ENCODE measurements at regions of chr2 and their contacts with region 1.

Region 1: DNA sequence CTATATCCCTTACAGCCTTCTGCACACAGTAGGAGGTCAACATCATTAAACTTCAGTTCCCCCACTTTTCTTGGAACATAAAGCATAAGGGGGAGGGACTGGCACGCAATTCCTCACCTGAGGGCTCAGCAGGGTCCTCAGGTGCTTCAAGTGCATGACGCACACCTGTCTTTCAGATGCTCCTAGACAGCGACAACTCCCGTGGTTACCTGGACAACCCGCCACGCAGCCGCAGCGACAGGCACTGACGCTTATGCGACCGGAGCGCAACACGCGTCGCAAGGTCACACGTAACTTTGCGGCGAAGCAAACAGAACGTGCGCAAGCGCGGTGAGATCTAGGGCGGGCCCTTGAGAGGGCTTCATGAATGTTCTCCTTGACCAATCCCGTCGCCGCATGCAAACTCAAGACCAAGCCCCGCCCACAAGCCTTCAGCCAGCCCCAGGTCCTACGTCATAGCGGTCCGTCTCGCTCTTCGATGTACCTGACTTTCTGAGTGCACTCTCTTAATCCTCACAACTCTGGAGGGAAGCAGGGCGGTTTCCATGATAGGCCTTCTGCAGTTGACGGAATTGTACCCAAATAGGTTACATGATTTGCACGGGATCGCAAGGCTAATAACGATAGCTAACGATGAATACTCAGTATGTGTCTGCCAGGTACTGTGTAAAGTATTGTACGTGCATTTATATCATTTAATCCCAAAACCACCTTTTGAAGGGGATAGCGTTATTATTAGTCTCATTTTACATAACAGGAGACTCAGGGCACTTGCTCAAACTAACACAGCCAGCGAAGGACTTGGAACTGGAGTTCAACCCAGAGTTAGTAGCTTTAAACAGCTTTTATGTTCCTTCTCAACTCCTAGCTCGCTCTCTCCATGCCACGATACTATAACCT is at the start of gene IFT172:
- DNase-seq: peak; percentile 100
- H3K4me3 Mint-ChIP-seq: peak within 1 kb of the TSS; percentile 88
- H3K27ac Mint-ChIP-seq: peak within 1 kb of the TSS; percentile 76
- H3K4me1 Mint-ChIP-seq: peaks cover 31% of the 10 kb centered on the region
- H3K27me3 Mint-ChIP-seq: peaks cover 14% of the 10 kb centered on the region
- total RNA-seq, gene IFT172: 7.7 to 8.2 TPM

Region 2: DNA sequence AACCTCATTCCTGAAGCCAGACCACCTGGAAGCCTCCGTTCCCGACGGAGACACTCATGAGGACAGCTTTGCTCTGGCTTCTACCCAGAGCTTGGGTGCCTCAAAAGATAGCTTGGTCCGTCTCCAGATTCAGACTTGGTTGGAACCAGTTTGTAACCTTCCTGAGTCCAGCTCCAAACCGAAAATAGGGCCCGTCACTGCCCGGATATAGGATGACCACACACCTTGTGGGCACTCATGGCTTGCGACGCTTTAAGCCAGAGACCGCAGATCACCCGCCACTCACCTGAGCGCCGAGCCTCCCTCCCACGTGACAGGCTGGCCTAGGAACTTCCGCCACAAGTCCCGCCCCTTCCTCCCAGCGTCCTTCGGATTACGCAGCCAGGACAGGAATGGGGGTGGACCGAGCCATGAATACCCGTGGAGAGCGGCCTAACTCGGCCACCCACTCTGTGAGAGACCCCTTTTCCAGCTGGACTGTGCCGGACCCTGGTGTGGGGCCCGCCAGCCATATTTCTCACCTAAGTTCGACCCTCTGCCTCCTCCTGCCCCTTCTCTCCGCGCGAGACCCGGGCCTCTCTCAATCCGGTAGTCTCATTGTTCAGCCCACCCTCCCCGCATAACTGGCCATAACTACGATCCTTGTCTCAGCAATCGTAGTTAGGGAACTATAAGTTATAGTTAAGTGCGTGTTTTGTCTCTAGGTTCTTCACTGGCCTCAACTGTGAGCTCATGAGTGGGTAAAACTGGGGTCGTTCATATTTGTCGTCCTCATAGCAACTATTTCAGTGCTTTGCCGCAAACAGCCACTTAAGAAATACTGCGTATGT is 166.8 kb before region 1 on chr2 and contains the start of gene MPV17:
- CTCF ChIA-PET with region 1: no interaction called
- POLR2A ChIA-PET with region 1: no interaction called
- intact Hi-C with region 1: loop called (anchors 1 kb)
- DNase-seq: peak; percentile 94
- H3K4me3 Mint-ChIP-seq: peak within 1 kb of the TSS; percentile 93
- H3K27ac Mint-ChIP-seq: peak within 1 kb of the TSS; percentile 88
- H3K4me1 Mint-ChIP-seq: peaks cover 18% of the 10 kb centered on the region
- H3K27me3 Mint-ChIP-seq: no peaks in the 10 kb centered on the region
- total RNA-seq, gene MPV17: 85.5 to 86.0 TPM

Region 3: DNA sequence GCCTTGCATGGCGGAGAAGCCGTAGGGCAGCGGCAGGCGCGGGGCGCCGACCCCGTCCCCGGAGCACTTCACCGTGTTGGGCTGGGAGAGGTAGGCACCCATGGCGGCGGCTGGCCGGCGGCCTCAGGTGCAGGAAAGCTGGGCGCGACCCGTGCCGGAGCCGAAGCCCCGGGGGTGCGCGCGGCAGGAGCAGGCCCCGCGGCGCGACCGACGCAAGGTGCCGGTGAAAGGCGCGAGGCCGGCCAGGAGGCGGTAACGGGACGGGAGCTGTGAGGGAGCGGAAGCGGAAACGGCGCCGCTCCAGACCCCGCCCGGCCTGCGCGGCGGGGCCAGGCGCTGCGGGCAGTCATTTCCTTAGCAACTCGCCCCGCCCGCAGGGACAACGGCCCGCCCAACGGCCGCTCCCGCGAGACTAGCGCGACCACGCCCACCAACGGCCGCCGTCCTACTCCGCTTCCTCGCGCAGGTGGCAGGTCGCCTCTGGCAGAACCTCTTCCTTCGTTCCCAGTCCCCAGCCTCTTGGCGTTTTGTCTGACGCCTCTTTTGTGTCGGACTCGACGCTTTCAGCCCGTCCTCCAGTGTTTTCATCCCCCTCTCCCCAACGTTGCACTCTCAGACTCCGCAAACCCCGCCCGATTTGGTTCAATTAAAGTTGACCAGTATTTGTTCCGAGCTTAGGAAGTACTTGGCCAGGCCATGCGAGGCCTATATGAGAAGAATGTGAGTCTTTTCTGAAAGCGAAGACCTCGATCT is 80.3 kb before region 1 on chr2 and contains the start of gene PPM1G:
- CTCF ChIA-PET with region 1: no interaction called
- POLR2A ChIA-PET with region 1: no interaction called
- intact Hi-C with region 1: loop called (anchors 1 kb)
- DNase-seq: peak; percentile 98
- H3K4me3 Mint-ChIP-seq: peak within 1 kb of the TSS; percentile 88
- H3K27ac Mint-ChIP-seq: peak within 1 kb of the TSS; percentile 87
- H3K4me1 Mint-ChIP-seq: peaks cover 32% of the 10 kb centered on the region
- H3K27me3 Mint-ChIP-seq: no peaks in the 10 kb centered on the region
- total RNA-seq, gene PPM1G: 127 to 132 TPM

Region 4: DNA sequence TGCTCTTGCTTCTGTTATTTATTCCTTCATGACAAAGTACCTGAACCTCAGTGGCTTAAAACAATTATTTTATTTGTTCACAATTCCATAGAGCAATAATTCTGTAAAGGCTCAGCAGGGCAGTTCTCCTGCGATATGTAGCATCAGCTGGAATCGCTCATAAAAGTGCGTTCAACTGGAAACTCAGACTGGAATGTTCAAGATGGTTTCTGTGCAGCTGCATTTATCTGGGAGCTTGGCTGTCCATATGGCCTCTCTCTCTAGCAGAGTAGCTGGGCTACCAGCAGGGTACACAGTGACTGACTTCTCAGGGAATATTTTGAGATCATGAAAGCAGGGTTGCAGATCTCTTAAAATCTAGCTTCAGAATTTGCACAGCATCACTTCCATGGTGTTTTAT is 125.6 kb after region 1 on chr2:
- CTCF ChIA-PET with region 1: no interaction called
- POLR2A ChIA-PET with region 1: no interaction called
- intact Hi-C with region 1: no loop called
- DNase-seq: no peak
- H3K4me3 Mint-ChIP-seq: no peak overlapping the region
- H3K27ac Mint-ChIP-seq: no peak overlapping the region
- H3K4me1 Mint-ChIP-seq: no peaks in the 10 kb centered on the region
- H3K27me3 Mint-ChIP-seq: no peaks in the 10 kb centered on the region

Region 5: DNA sequence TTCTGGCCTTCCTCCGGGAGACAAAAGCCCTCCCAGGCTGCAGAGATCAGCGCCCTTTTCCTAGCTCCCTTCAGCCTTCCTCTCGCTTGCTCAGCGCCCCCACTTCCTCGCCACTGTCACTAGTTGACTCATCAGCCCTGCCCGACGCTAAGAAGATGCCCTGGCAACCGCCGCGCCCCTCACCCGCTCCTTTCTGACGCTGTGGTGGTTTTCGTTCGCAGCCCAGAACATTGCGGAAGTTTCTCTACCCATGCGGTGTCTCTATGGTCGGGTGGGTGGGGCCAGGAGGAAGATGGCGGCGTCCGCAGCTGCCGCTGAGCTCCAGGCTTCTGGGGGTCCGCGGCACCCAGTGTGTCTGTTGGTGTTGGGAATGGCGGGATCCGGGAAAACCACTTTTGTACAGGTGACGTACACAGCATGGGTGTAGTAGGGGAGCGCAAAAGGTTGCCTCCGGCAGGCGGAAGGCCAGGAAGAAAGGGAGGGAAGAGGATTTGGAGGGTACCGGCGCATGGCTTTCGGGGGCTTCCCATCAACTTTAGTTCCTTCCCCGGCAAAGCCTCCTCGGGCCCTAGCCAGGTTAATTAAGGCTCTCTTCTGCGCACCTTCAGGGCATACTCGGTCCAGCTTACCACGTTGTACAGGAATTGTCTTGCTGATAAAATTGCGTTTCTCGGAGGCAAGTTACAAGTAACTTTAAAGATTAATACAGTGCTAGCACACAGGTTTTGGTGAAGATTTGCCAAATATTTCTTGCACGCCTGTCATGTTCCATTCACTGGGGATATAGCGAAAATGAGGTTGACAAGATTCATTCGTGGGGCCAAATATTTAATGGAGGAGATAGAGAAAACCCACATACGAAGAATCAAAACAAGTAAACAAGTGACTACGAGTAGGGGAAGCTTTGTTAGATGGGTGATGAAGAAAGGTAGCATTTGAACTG is 139.3 kb after region 1 on chr2 and contains the starts of genes CCDC121 and GPN1:
- CTCF ChIA-PET with region 1: no interaction called
- POLR2A ChIA-PET with region 1: no interaction called
- intact Hi-C with region 1: loop called (anchors 2 kb)
- DNase-seq: peak; percentile 98
- H3K4me3 Mint-ChIP-seq: no peak within 1 kb of the TSS
- H3K27ac Mint-ChIP-seq: no peak within 1 kb of the TSS
- H3K4me1 Mint-ChIP-seq: peaks cover 35% of the 10 kb centered on the region
- H3K27me3 Mint-ChIP-seq: no peaks in the 10 kb centered on the region
- total RNA-seq, gene CCDC121: 0.34 to 0.36 TPM
- total RNA-seq, gene GPN1: 54.4 to 56.8 TPM

Region 6: GRCh38 chr2:27638037-27638637 is 148.4 kb after region 1 on chr2:
- CTCF ChIA-PET with region 1: no interaction called
- POLR2A ChIA-PET with region 1: no interaction called
- intact Hi-C with region 1: loop called (anchors 1 kb)
- DNase-seq: no peak
- H3K4me3 Mint-ChIP-seq: peak overlapping the region; percentile 33
- H3K27ac Mint-ChIP-seq: peak overlapping the region; percentile 99
- H3K4me1 Mint-ChIP-seq: peaks cover 35% of the 10 kb centered on the region
- H3K27me3 Mint-ChIP-seq: no peaks in the 10 kb centered on the region

Region 7: DNA sequence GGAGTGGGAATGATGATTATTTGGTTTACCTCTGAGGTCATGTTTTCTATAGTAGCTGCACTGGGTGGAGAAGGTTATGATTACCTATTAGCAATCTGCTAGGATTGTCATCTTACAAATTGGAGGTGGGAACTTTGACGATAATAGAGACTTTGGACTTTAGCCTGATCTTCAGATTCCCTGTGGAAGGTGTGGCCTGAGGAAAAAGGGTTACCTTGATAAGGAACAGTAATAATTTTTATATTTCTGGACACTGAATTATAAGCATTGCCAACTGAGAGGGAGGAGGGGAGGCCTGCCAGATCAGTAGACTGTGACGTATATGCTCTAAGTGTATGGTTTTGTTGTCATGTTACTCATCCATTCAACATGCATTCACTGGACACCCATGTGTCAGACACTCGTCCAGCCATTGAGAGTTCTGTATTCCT is 719.5 kb after region 1 on chr2:
- CTCF ChIA-PET with region 1: no interaction called
- POLR2A ChIA-PET with region 1: no interaction called
- intact Hi-C with region 1: no loop called
- DNase-seq: no peak
- H3K4me3 Mint-ChIP-seq: no peak overlapping the region
- H3K27ac Mint-ChIP-seq: no peak overlapping the region
- H3K4me1 Mint-ChIP-seq: no peaks in the 10 kb centered on the region
- H3K27me3 Mint-ChIP-seq: no peaks in the 10 kb centered on the region